ENCODE measurements at regions of chr19 and their contacts with region 1.

Region 1: DNA sequence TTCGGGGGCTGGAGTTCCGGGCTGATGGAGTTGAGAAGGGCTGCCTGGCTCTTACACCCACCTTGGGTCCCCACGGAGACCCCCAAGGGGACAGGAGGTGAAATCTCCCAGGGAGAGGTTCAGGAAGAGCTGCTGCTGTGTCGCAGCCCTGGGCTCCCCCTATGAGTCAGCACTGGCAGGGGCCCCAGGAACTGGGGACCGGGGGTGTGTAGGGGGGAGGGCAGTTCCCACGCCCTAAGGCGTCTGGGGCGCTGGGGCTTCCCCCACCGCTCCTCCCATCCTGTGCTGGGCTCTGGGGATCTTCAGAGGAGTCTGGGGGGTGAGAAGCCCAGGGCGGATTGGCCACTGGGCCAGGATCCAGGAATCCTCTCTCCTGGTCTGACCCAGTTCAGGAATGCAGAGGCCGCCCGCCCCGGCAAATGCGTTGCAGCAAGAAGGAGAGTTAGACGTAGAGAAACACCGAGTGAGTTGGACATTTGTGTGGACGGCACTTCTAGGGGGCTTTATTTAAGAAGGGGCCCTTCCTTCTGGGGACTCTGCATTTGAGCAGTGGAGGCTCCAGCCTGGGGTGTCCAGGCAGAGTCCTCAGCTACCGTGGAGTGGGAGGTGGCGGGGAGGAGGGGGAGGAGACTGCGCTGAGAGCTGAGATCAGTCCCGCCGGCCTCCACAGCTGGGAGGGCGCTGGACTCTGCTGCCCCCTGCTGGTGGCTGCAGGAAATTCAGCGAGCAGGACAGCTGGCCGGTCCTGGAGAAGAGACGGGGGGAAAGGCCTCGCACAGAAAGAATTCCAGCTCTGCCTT is 15.0 kb upstream of the NANOS3 start:
- DNase-seq: peak; percentile 76 to 96
- H3K4me3 ChIP-seq: peak overlapping the region; percentile 51 to 60
- H3K27ac ChIP-seq: peak overlapping the region; percentile 82 to 89
- H3K4me1 ChIP-seq: peaks cover 5 to 8% of the 10 kb centered on the region in 2 donors
- H3K27me3 ChIP-seq: no peaks in the 10 kb centered on the region
- CTCF ChIP-seq: peak; percentile 97 to 99 (median 97)

Region 2: GRCh38 chr19:13597640-13598039 is 264.3 kb before region 1 on chr19:
- intact Hi-C with region 1: loop called (anchors 1 kb)
- DNase-seq: peak in 1 of 2 donors; percentile 64
- H3K4me3 ChIP-seq: no peak overlapping the region
- H3K27ac ChIP-seq: no peak overlapping the region
- H3K4me1 ChIP-seq: no peaks in the 10 kb centered on the region
- H3K27me3 ChIP-seq: no peaks in the 10 kb centered on the region
- CTCF ChIP-seq: peak; percentile 54 to 61 (median 60)

Region 3: DNA sequence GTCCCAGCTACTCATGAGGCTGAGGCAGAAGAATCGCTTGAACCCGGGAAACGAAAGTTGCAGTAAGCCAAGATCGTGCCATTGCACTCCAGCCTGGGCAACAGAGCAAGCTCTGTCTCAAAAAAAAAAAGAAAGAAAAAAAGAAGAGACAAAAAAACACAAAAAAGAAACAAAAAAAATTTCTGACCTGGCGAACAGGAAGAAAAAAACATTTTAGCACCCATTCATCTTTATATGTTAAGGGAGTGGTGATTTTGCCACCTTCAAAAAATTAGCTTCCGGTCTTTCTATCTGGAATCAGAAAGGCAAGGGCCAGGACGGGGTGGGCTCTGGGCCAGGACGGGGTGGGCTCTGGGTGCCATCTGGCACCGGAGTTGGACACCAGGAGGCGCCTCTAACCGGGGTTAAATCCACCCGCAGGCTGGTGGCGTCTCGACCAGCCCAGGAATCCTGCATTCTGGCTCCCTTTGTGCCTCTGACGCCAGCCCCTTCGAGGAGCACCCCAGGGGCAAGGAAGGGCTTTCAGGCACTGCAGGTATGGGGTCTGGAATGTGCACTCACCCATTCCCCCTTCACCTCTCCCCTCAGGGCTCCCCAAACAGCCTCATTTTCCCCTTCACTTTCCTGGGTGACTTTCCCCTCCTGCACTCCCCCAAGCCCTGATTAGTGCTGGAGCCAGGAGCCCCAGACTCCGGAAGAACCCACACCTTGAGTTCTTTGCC is 77.0 kb before region 1 on chr19:
- intact Hi-C with region 1: loop called (anchors 1 kb)
- DNase-seq: peak; percentile 28 to 87
- H3K4me3 ChIP-seq: no peak overlapping the region
- H3K27ac ChIP-seq: peak overlapping the region; percentile 76 to 94
- H3K4me1 ChIP-seq: peaks cover 25 to 53% of the 10 kb centered on the region in 2 donors
- H3K27me3 ChIP-seq: no peaks in the 10 kb centered on the region
- CTCF ChIP-seq: peak; percentile 72 to 83 (median 76)

Region 4: GRCh38 chr19:13823256-13823655 is 38.7 kb before region 1 on chr19:
- intact Hi-C with region 1: loop called (anchors 5 kb)
- DNase-seq: no peak
- H3K4me3 ChIP-seq: no peak overlapping the region
- H3K27ac ChIP-seq: peak overlapping the region; percentile 53 to 82
- H3K4me1 ChIP-seq: peaks cover 0 to 9% of the 10 kb centered on the region in 2 donors
- H3K27me3 ChIP-seq: no peaks in the 10 kb centered on the region
- CTCF ChIP-seq: no peak

Region 5: DNA sequence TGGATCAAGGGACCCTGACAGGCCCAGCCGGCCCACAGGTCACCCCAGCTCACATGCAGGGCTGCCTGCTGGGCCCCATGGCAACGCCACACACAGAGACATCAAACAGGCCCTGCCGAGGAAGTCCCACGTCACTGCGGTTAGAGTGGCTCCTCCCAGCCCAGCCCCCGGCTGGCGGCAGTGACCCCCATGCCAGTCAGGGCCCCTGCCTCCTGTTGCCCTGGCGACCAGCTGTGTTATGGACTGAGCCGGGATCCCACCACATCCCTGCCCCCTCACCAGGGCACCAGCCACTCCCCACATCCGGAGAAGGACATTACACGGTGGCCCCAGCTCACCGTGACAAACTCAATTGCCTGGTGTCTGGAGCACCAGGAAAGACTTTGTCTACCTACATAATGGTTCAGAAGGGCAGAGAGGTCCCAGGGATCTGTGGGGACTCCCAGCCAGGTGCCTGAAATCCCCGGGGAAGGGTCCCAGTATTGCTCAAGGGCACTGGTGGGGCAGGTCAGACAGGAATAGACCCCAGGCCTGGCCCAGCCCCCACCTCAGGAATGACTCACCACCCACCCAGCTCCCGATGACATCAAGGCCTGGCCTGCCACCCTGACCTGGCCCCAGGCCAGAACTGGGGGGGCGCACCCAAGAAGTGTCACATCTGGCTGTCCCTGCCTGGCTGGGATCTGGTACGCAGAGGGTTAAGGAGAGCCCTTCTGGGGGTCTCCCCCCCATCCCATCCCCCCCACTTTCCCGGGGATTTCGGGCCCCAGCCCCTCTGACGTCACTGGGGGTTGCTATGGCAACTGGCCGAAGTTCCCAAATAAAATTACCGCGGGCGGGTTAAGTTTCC is 15.2 kb before region 1 on chr19:
- intact Hi-C with region 1: loop called (anchors 1 kb)
- DNase-seq: peak; percentile 91 to 98
- H3K4me3 ChIP-seq: peak overlapping the region; percentile 50 to 70
- H3K27ac ChIP-seq: peak overlapping the region; percentile 99 to 100
- H3K4me1 ChIP-seq: peaks cover 20 to 59% of the 10 kb centered on the region in 2 donors
- H3K27me3 ChIP-seq: no peaks in the 10 kb centered on the region
- CTCF ChIP-seq: no peak

Region 6: DNA sequence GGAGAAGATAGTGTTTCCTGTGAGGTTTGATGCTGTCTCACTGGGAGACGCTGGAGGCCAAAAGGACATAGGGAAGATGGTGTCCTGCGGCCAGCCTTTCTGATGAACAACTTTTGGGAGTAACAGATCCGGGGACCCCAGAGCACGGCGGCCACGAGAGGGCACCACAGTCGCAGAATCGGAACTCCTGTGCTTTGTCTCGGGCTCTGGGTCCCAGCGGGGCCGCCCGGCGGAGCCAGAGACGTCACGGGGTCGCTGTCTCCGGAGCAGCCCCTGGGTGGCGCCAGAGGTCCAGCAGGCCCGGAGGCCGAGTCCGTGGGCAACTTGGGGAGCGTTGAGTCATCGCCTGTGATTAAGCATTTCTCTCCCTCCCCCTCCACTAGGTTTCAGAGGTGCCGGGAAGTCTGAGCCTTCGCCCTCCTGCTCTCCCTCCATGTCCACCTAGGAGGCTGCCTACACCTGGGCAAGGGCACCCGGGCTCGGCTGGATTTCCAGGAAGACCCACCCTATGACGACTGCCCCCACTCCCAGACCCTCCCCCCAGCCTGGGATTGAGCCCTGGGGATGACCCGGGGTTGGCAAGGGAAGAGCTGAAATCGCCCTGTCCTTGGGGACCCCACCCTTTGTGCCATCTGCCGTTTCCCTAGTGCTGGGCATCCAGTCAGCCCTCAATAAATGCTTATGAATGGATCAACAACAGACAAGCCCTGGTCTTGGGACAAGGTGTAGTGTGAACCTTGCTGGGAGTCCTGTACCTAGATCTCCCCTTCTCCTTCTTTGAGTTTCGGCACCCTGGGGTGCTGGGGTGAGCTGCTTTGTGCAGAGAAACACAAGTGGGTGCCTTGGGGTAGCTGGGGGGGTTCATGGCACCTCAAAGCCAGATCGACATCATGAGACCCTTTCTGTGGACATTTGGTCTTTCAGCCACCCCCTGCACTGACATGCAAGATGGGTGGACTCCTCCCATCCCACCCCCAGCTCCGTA is 18.4 kb after region 1 on chr19:
- intact Hi-C with region 1: no loop called
- DNase-seq: peak; percentile 92 to 99
- H3K4me3 ChIP-seq: peak overlapping the region; percentile 26 to 53
- H3K27ac ChIP-seq: peak overlapping the region; percentile 58 to 81
- H3K4me1 ChIP-seq: peaks cover 6 to 13% of the 10 kb centered on the region in 2 donors
- H3K27me3 ChIP-seq: no peaks in the 10 kb centered on the region
- CTCF ChIP-seq: peak; percentile 99 to 100 (median 99)

Measured in ascending aorta (tissue), 2 donors.